Aorta (tissue), 5 donors: ENCODE measurements at regions of chr7 and their contacts with region 1.

Region 1: DNA sequence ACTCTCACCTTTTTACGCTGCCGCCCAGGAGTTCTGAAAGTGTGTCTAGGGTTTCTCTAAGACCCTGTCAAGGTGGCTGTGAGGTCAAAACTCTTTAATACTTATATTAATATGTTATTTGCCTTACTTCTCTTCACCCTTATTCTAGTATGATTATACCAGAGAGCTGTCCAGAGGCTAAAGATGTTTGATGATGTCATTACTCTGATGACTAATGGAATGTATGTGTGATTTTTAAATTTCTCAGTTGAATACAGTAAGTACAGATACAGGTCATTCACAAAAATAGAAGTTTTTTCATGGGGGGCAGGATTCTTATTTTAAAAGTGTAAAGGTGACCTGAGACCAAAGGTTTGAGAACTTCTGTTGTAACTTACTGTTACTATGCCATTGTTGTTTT is 150.6 kb upstream of the FOXP2 start:
- DNase-seq: no peak
- ATAC-seq: no peak
- H3K4me3 ChIP-seq: no peak overlapping the region
- H3K27ac ChIP-seq: no peak overlapping the region
- H3K4me1 ChIP-seq: peaks cover 0 to 3% of the 10 kb centered on the region in 2 donors
- H3K27me3 ChIP-seq: no peaks in the 10 kb centered on the region

Region 2: GRCh38 chr7:114109721-114110120 is 154.3 kb before region 1 on chr7:
- intact Hi-C with region 1: loop called in 1 of 2 experiments (anchors 10 kb)
- DNase-seq: no peak
- ATAC-seq: no peak
- H3K4me3 ChIP-seq: no peak overlapping the region
- H3K27ac ChIP-seq: no peak overlapping the region
- H3K4me1 ChIP-seq: peaks cover 3 to 12% of the 10 kb centered on the region in 2 donors
- H3K27me3 ChIP-seq: no peaks in the 10 kb centered on the region

Region 3: GRCh38 chr7:114392686-114393085 is 128.7 kb after region 1 on chr7:
- intact Hi-C with region 1: no loop called
- DNase-seq: no peak
- ATAC-seq: no peak
- H3K4me3 ChIP-seq: no peak overlapping the region
- H3K27ac ChIP-seq: no peak overlapping the region
- H3K4me1 ChIP-seq: peaks cover 0 to 3% of the 10 kb centered on the region in 2 donors
- H3K27me3 ChIP-seq: no peaks in the 10 kb centered on the region

Region 4: GRCh38 chr7:114444196-114444595 is 180.2 kb after region 1 on chr7:
- intact Hi-C with region 1: no loop called
- DNase-seq: no peak
- ATAC-seq: no peak
- H3K4me3 ChIP-seq: no peak overlapping the region
- H3K27ac ChIP-seq: no peak overlapping the region
- H3K4me1 ChIP-seq: no peaks in the 10 kb centered on the region
- H3K27me3 ChIP-seq: no peaks in the 10 kb centered on the region